GM23248 (cell line): ENCODE measurements at regions of chr18 and their contacts with region 1.

Region 1: DNA sequence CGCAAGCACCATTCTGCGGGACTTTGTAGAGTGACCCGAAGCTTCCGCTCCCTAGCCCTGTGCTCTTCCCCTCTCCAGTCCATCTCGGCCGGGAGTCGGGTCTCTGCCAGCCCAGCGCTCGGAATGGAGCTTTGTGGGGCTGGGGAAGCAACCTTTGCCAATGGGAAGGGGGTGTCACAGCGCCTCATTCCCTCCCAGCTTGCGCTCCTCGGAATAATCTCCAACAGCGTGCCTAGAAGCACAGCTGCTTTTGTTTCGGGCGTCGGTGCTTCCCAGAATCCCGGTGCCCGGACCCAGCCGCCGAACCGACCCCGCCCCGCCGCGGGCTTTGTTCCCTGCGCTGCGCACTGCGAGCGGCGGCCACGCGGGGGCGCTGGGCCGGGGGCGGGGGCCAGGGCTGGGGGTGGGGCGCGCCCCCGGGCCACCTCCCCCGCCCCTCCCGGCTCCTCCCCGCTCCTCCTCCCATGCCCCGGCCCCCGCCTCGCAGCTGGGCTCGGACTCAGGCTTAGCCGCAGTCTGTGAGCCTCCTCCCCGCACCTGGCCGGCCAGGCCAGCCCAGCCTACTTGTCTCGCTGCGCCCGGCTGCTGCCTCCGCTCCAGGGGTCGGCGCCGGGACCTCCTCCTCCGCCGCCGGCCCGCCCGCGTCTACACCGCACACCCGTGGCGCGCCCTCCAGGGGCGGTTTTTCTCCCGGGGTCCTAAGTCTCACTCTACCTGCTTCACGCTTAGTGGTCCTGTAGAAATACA is 77.7 kb upstream of the SMAD2 start:
- DNase-seq: peak; percentile 38
- H3K4me3 ChIP-seq: peak overlapping the region; percentile 66
- H3K27ac ChIP-seq: no peak overlapping the region
- H3K4me1 ChIP-seq: peaks cover 5% of the 10 kb centered on the region; the same call in 1 of the 2 replicates
- H3K27me3 ChIP-seq: peaks cover 21% of the 10 kb centered on the region

Region 2: DNA sequence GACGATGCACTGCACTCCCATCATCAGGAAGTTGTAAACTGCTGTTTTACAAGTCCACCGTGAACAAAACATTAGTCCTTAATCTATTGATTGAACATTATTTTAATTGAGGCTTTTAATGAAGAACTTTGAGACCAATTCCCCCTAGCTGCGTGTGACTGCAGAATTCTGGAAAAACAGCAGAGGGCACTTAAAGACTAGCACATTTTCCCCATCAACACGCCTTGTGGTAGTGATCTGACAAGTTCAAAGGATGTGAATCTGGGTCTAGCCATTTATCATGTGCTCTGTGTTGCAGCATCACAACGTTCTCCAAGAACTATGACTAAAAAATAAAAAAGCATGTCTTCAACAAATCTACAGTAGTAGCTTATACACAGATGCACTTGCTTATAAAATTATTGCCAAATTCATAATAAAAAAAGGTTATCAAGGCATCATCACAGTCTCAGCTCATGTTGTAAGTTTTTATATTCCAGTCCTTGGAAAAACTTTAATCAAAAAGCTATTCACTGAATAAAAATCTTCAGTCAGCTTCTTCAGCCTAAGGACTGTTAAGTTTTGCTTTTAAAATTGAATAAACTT is 792.5 kb before region 1 on chr18:
- in situ Hi-C with region 1: loop called (anchors 25 kb)
- DNase-seq: peak; percentile 72
- H3K4me3 ChIP-seq: no peak overlapping the region
- H3K27ac ChIP-seq: no peak overlapping the region
- H3K4me1 ChIP-seq: no peaks in the 10 kb centered on the region
- H3K27me3 ChIP-seq: peaks cover 56% of the 10 kb centered on the region

Region 3: DNA sequence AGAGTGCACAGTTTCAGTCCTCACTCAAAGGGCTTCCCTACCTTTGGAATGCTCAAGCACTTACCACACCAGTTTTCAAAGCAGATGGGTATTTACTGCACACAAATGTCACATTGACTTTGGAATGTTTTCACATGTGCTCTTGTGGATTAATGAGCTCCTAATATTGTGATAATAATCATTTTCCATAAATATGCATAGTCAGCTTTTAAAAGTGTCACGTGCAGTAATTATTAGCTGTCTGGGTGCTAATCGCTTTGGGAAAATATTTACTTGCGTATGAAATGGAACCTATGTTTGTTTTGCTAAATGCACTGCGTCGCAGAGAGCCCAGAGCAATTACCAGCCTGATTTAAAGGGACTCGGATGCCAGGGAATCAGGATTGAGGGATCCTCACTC is 307.0 kb before region 1 on chr18:
- in situ Hi-C with region 1: no loop called
- DNase-seq: no peak
- H3K4me3 ChIP-seq: no peak overlapping the region
- H3K27ac ChIP-seq: no peak overlapping the region
- H3K4me1 ChIP-seq: no peaks in the 10 kb centered on the region
- H3K27me3 ChIP-seq: no peaks in the 10 kb centered on the region

Region 4: DNA sequence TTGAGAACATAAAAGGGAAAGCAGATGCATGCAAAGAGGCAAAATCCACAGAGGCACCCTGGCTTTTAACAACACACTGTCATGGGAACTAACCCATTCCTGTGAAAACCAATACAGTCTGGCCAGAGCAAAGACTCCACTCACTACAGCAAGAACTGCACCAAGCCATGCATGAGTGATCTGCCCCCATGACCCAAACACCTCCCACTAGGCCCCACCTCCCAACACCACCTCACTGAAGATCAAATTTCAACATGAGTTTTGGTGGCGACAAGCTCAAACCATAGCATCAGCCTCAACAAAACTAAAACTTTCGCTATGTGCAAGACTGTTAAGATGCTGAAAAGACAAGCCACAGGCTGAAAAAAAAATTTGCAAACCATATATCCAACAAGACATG is 240.4 kb before region 1 on chr18:
- in situ Hi-C with region 1: loop called (anchors 10 kb)
- DNase-seq: no peak
- H3K4me3 ChIP-seq: no peak overlapping the region
- H3K27ac ChIP-seq: no peak overlapping the region
- H3K4me1 ChIP-seq: no peaks in the 10 kb centered on the region
- H3K27me3 ChIP-seq: peaks cover 6% of the 10 kb centered on the region

Region 5: DNA sequence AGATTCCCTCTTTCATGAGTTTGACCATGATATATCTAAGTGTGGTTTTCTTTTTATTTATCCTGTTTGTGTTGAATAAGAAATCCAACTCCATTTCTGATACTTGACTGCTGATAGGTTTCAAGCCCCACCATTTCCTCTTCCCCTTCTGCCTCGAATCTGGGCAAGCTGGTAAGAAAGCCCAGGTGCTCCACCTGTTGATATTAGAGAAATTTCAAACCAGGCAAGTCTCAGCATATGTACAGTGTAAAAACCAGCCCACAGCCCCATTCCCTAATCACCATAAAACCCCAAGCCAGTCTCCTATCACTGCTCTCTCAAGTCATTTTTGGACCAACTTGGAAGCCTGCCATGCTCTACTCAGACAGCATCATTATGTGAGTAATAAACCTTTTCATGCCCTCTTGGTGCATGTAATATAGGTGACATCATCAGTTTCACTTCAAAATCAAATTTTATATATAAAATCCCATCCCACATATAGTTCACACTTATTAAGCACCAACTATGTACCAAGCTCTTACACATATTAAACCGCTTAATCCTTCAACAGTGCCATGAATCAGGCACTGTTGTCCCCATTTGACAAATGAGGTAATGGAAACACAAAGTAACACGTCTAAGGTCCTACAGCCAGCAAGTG is 124.2 kb before region 1 on chr18:
- in situ Hi-C with region 1: no loop called
- DNase-seq: peak; percentile 77
- H3K4me3 ChIP-seq: no peak overlapping the region
- H3K27ac ChIP-seq: no peak overlapping the region
- H3K4me1 ChIP-seq: peaks cover 26% of the 10 kb centered on the region
- H3K27me3 ChIP-seq: no peaks in the 10 kb centered on the region

Region 6: DNA sequence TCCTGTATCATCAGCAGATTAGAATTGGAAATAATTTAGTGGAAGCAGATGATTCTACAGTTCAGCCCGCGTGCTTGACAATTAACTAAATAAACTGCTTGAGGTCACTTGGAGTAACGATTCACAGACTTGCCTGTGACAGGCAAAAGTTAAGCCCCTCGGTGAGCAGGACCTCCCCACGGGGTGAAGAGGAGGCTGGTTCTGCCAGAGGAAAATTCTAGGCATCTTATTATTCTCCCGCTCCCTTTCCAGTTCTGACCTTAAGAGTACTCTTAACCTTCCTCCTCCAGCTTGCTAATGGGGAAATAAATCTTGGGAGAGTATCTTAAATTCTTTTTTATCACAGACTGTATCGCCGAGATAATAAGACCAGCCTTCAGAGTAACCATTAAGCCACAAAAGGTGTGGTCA is 92.0 kb after region 1 on chr18:
- in situ Hi-C with region 1: no loop called
- DNase-seq: no peak
- H3K4me3 ChIP-seq: no peak overlapping the region
- H3K27ac ChIP-seq: no peak overlapping the region
- H3K4me1 ChIP-seq: no peaks in the 10 kb centered on the region
- H3K27me3 ChIP-seq: peaks cover 15% of the 10 kb centered on the region